ENCODE measurements at regions of chr3 and their contacts with region 1.

Region 1: GRCh38 chr3:113912552-113913236 is 35.1 kb upstream of the ZDHHC23 start:
- DNase-seq: peak; percentile 68
- ATAC-seq: peak; percentile 97
- H3K4me3 ChIP-seq: peak overlapping the region in 1 of 5 experiments; percentile 22
- H3K4me3 Mint-ChIP-seq: peak overlapping the region; percentile 53
- H3K27ac ChIP-seq: no peak overlapping the region
- H3K27ac Mint-ChIP-seq: peak overlapping the region; percentile 13
- H3K4me1 ChIP-seq: peaks cover 0 to 3% of the 10 kb centered on the region in 2 donors
- H3K4me1 Mint-ChIP-seq: peaks cover 4% of the 10 kb centered on the region
- H3K27me3 ChIP-seq: no peaks in the 10 kb centered on the region
- H3K27me3 Mint-ChIP-seq: no peaks in the 10 kb centered on the region
- CTCF ChIP-seq: peak; percentile 75

Region 2: DNA sequence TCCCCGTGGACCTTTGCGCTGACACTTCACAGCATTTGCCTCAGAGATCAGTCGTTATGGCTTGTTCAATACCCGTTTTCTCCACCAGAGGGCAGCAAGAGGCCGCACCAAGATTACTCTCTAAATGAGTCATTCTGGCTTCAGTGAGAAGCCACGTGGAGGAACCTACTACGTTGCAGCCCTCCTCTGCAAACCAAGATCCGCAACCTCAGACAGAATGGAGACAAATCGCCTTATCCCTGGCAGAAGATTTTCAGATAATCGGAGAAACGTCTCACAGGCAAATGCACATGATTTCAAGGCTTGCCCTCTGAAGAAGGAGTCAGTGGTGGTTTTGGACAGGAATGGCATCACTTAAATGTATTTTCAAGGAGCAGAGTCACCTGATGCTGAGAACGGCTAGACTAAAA is 861.4 kb before region 1 on chr3:
- CTCF ChIA-PET with region 1: no interaction called
- POLR2A ChIA-PET with region 1: no interaction called
- intact Hi-C with region 1: loop called (anchors 2 kb)
- DNase-seq: peak; percentile 88
- ATAC-seq: peak; percentile 100
- H3K4me3 ChIP-seq: no peak overlapping the region
- H3K4me3 Mint-ChIP-seq: no peak overlapping the region
- H3K27ac ChIP-seq: no peak overlapping the region
- H3K27ac Mint-ChIP-seq: no peak overlapping the region
- H3K4me1 ChIP-seq: peaks cover 0 to 4% of the 10 kb centered on the region in 2 donors
- H3K4me1 Mint-ChIP-seq: peaks cover 2% of the 10 kb centered on the region
- H3K27me3 ChIP-seq: no peaks in the 10 kb centered on the region
- H3K27me3 Mint-ChIP-seq: no peaks in the 10 kb centered on the region
- CTCF ChIP-seq: peak; percentile 95

Region 3: GRCh38 chr3:113495035-113495434 is 417.7 kb before region 1 on chr3:
- CTCF ChIA-PET with region 1: interaction called, 10 read pairs
- POLR2A ChIA-PET with region 1: no interaction called
- intact Hi-C with region 1: loop called (anchors 10 kb)
- DNase-seq: peak; percentile 60
- ATAC-seq: peak; percentile 47
- H3K4me3 ChIP-seq: no peak overlapping the region
- H3K4me3 Mint-ChIP-seq: no peak overlapping the region
- H3K27ac ChIP-seq: no peak overlapping the region
- H3K27ac Mint-ChIP-seq: no peak overlapping the region
- H3K4me1 ChIP-seq: no peaks in the 10 kb centered on the region
- H3K4me1 Mint-ChIP-seq: no peaks in the 10 kb centered on the region
- H3K27me3 ChIP-seq: no peaks in the 10 kb centered on the region
- H3K27me3 Mint-ChIP-seq: no peaks in the 10 kb centered on the region
- CTCF ChIP-seq: peak; percentile 57

Region 4: GRCh38 chr3:113838631-113839209 is 74.0 kb before region 1 on chr3 and contains the start of gene GRAMD1C:
- CTCF ChIA-PET with region 1: interaction called, 40 read pairs
- POLR2A ChIA-PET with region 1: no interaction called
- intact Hi-C with region 1: loop called (anchors 2 kb)
- DNase-seq: peak; percentile 92
- ATAC-seq: peak; percentile 99
- H3K4me3 ChIP-seq: peak within 1 kb of the TSS; percentile 59 to 84 (median 70)
- H3K4me3 Mint-ChIP-seq: peak within 1 kb of the TSS; percentile 91
- H3K27ac ChIP-seq: peak within 1 kb of the TSS; percentile 8 to 62
- H3K27ac Mint-ChIP-seq: peak within 1 kb of the TSS; percentile 71
- H3K4me1 ChIP-seq: peaks cover 7 to 13% of the 10 kb centered on the region in 2 donors
- H3K4me1 Mint-ChIP-seq: peaks cover 29% of the 10 kb centered on the region
- H3K27me3 ChIP-seq: no peaks in the 10 kb centered on the region
- H3K27me3 Mint-ChIP-seq: no peaks in the 10 kb centered on the region
- CTCF ChIP-seq: peak; percentile 84
- total RNA-seq, gene GRAMD1C: 47.1 and 52.5 TPM in 2 replicates

Region 5: GRCh38 chr3:114043205-114043604 is 130.5 kb after region 1 on chr3:
- CTCF ChIA-PET with region 1: interaction called, 4 read pairs
- POLR2A ChIA-PET with region 1: interaction called, 12 read pairs
- intact Hi-C with region 1: no loop called
- DNase-seq: peak; percentile 55
- ATAC-seq: peak; percentile 61
- H3K4me3 ChIP-seq: no peak overlapping the region
- H3K4me3 Mint-ChIP-seq: no peak overlapping the region
- H3K27ac ChIP-seq: no peak overlapping the region
- H3K27ac Mint-ChIP-seq: peak overlapping the region; percentile 4
- H3K4me1 ChIP-seq: no peaks in the 10 kb centered on the region
- H3K4me1 Mint-ChIP-seq: peaks cover 5% of the 10 kb centered on the region
- H3K27me3 ChIP-seq: no peaks in the 10 kb centered on the region
- H3K27me3 Mint-ChIP-seq: no peaks in the 10 kb centered on the region
- CTCF ChIP-seq: peak; percentile 22